ENCODE measurements at regions of chrX and their contacts with region 1.

Region 1: DNA sequence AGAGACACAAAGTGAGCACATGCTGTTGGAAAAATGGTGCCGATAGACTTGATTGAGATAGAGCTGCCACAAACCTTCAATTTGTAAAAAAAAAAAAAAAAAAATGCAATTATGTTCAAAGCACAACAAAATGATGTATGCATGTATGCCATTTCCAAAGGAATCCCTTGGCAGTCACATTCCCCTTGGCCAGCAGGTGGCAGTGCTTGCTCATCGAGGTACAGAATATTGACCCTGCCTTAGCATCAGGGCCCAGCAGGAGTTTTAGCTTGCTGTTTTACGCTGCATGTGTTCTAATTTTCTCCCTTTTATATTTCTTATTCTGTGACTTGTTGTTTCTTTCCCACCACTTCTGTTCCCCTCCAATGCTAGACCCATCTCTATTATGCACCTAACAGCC is 34.5 kb upstream of the CYBB start:
- DNase-seq: peak; percentile 81
- H3K4me3 Mint-ChIP-seq: no peak overlapping the region
- H3K27ac Mint-ChIP-seq: no peak overlapping the region
- H3K4me1 Mint-ChIP-seq: peaks cover 16% of the 10 kb centered on the region
- H3K27me3 Mint-ChIP-seq: no peaks in the 10 kb centered on the region

Region 2: DNA sequence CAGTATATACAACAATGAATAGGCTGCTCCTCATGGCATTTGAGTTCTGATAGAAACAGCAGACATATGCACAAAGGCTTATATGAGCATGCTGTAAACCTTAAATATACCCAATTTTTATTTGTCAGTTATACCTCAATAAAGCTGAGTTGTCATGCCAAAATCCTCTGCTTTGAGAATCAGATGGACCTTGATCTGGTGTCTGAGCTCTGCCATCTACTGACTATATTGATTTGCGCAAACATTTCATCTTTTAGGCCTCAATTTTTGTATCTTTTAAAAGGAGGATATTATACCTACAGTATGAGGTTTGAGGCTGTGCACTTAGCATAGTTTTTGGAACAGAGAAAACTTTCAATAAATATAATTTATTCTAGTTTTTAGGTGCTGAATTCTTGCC is 311.0 kb before region 1 on chrX:
- CTCF ChIA-PET with region 1: no interaction called
- POLR2A ChIA-PET with region 1: no interaction called
- intact Hi-C with region 1: no loop called
- DNase-seq: no peak
- H3K4me3 Mint-ChIP-seq: no peak overlapping the region
- H3K27ac Mint-ChIP-seq: no peak overlapping the region
- H3K4me1 Mint-ChIP-seq: no peaks in the 10 kb centered on the region
- H3K27me3 Mint-ChIP-seq: peaks cover 1% of the 10 kb centered on the region

Region 3: GRCh38 chrX:37825209-37825842 is 80.0 kb after region 1 on chrX:
- CTCF ChIA-PET with region 1: interaction called, 168 read pairs
- POLR2A ChIA-PET with region 1: no interaction called
- intact Hi-C with region 1: loop called (anchors 1 kb)
- DNase-seq: peak; percentile 62
- H3K4me3 Mint-ChIP-seq: no peak overlapping the region
- H3K27ac Mint-ChIP-seq: no peak overlapping the region
- H3K4me1 Mint-ChIP-seq: peaks cover 26% of the 10 kb centered on the region
- H3K27me3 Mint-ChIP-seq: no peaks in the 10 kb centered on the region

Region 4: DNA sequence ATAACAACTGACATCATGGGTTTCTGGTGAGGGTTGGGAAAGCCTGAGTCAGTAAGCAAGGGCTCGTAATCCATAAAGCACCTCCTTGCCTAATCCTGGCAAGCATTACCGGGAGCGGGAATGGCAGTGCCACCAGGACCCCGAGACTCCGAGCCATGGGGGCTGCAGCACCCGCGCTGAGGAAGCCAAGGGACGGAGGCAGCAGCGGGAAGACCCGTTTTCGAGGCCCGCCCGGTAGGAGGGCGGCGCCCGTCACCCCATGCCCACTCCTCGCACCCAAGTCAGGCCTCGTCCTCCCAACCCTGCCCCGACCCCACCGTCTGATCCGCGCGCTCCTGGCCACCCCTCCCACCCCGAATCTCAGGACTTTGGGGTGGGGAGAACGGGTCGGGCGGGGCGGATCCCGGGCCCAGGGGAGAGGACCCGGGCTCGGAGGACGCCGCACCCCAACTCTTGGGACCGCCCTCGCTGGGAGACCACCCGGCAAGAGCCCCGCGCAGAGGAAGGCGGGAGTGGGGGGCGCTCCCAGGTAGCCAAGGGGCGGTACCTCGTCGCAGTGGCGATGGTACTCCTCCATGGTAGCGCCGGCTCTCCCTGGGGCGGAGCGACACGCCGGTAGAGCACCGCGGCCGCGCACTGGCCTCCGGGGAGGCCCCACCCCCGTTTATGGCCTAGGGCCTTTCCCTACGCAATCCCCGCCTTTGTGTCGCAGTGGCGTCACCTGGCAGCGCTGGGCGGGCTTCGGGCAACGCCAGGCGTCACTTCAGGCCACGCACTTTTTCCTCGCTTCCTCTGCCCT is 101.8 kb after region 1 on chrX and contains the start of gene DYNLT3:
- CTCF ChIA-PET with region 1: interaction called, 9 read pairs
- POLR2A ChIA-PET with region 1: interaction called, 3 read pairs
- intact Hi-C with region 1: loop called (anchors 1 kb)
- DNase-seq: peak; percentile 87
- H3K4me3 Mint-ChIP-seq: peak within 1 kb of the TSS; percentile 70
- H3K27ac Mint-ChIP-seq: peak within 1 kb of the TSS; percentile 87
- H3K4me1 Mint-ChIP-seq: peaks cover 22% of the 10 kb centered on the region
- H3K27me3 Mint-ChIP-seq: no peaks in the 10 kb centered on the region
- total RNA-seq, gene DYNLT3: 27.2 to 27.7 TPM

Region 5: GRCh38 chrX:38166478-38167083 is 421.2 kb after region 1 on chrX:
- CTCF ChIA-PET with region 1: interaction called, 10 read pairs
- POLR2A ChIA-PET with region 1: no interaction called
- intact Hi-C with region 1: no loop called
- DNase-seq: no peak
- H3K4me3 Mint-ChIP-seq: no peak overlapping the region
- H3K27ac Mint-ChIP-seq: no peak overlapping the region
- H3K4me1 Mint-ChIP-seq: no peaks in the 10 kb centered on the region
- H3K27me3 Mint-ChIP-seq: no peaks in the 10 kb centered on the region